Psoas muscle (tissue), 8 donors: ENCODE measurements at regions of chr6 and their contacts with region 1.

Region 1: GRCh38 chr6:118893807-118894424 is at the start of gene ASF1A:
- DNase-seq: peak; percentile 95 to 97
- ATAC-seq: peak; percentile 90 to 93 (median 92)
- H3K4me3 ChIP-seq: peak within 1 kb of the TSS; percentile 96
- H3K27ac ChIP-seq: peak within 1 kb of the TSS; percentile 95
- H3K4me1 ChIP-seq: peaks cover 18% of the 10 kb centered on the region
- H3K27me3 ChIP-seq: no peaks in the 10 kb centered on the region
- CTCF ChIP-seq: peak; percentile 56
- total RNA-seq, gene ASF1A: 6.8 to 15.4 (median 12.1) TPM

Region 2: DNA sequence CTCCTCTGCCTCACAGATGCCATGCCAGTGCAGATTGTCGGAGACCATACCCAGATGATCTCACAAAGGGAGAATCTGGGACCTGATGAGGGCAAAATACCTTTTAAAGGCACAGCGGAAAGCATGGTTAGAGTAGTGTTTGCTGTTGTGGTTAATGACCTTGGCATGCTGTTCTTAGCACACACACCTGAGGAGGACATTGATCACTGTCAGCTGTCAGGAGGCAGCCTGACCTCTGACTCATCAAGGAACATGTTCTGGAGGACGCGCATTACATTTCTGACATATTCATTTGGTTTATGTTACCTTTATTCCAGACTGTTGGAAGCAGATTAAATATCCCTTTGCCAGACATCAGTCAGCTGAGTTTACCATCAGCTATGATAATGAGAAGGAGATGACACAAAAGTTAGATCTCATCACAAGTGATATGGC is 1348.7 kb before region 1 on chr6:
- intact Hi-C with region 1: no loop called
- DNase-seq: no peak
- ATAC-seq: peak; percentile 31 to 71 (median 56)
- H3K4me3 ChIP-seq: no peak overlapping the region
- H3K27ac ChIP-seq: peak overlapping the region; percentile 18
- H3K4me1 ChIP-seq: peaks cover 2% of the 10 kb centered on the region
- H3K27me3 ChIP-seq: no peaks in the 10 kb centered on the region
- CTCF ChIP-seq: no peak

Region 3: GRCh38 chr6:118825661-118826060 is 68.3 kb before region 1 on chr6:
- intact Hi-C with region 1: no loop called
- DNase-seq: no peak
- ATAC-seq: no peak
- H3K4me3 ChIP-seq: no peak overlapping the region
- H3K27ac ChIP-seq: no peak overlapping the region
- H3K4me1 ChIP-seq: peaks cover 3% of the 10 kb centered on the region
- H3K27me3 ChIP-seq: no peaks in the 10 kb centered on the region
- CTCF ChIP-seq: no peak

Region 4: DNA sequence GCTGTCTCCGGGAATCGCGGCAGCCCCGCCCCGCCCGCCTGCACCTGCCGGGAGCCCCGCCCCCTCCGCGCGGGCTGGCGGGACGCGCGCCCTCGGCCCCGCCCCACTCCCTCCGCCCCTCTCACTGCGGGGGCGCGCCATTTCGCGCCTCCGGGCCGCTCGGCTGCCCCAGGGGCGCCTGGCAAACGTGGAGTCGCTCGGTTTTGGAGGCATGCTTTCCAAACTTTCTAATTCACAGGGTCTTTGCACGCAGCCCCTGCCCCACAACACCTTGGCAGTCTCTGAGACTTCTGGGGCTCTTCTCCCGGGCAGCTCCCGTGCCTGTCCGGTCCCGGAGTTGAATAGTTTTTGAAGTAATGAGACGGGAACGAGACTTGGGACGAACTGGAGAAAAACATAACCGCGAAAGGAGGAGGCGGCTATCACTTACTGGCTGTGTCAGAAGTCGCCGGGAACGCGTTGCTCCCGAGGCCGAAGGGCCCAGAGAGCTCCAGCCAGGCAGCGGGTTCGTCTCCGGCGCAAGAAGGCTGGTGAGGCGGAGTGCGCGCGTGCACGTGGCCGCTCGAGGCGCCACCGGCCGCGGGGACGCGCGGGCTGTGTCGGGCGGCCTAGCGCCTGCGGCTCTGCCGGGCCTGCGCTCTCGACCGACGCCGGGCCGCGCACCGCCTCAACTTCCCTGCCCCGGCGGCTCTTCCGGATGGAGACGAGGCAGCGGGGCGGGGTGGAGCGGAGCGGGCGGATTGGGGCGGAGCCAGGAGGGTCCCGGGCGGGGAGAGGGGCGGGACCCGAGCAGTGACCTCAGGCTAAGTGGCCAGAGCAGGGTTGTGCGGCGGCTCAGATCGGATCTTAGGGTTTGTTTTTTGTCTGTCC is 40.8 kb after region 1 on chr6 and contains the start of gene MCM9:
- intact Hi-C with region 1: loop called (anchors 2 to 5 kb)
- DNase-seq: peak; percentile 92 to 94
- ATAC-seq: peak; percentile 96 to 98 (median 96)
- H3K4me3 ChIP-seq: peak within 1 kb of the TSS; percentile 77
- H3K27ac ChIP-seq: peak within 1 kb of the TSS; percentile 90
- H3K4me1 ChIP-seq: peaks cover 13% of the 10 kb centered on the region
- H3K27me3 ChIP-seq: no peaks in the 10 kb centered on the region
- CTCF ChIP-seq: no peak
- total RNA-seq, gene MCM9: 4.6 to 5.6 (median 5.0) TPM

Region 5: GRCh38 chr6:119006972-119007371 is 113.1 kb after region 1 on chr6:
- intact Hi-C with region 1: no loop called
- DNase-seq: no peak
- ATAC-seq: no peak
- H3K4me3 ChIP-seq: no peak overlapping the region
- H3K27ac ChIP-seq: no peak overlapping the region
- H3K4me1 ChIP-seq: no peaks in the 10 kb centered on the region
- H3K27me3 ChIP-seq: no peaks in the 10 kb centered on the region
- CTCF ChIP-seq: no peak